ENCODE measurements at regions of chr12 and their contacts with region 1.

Region 1: DNA sequence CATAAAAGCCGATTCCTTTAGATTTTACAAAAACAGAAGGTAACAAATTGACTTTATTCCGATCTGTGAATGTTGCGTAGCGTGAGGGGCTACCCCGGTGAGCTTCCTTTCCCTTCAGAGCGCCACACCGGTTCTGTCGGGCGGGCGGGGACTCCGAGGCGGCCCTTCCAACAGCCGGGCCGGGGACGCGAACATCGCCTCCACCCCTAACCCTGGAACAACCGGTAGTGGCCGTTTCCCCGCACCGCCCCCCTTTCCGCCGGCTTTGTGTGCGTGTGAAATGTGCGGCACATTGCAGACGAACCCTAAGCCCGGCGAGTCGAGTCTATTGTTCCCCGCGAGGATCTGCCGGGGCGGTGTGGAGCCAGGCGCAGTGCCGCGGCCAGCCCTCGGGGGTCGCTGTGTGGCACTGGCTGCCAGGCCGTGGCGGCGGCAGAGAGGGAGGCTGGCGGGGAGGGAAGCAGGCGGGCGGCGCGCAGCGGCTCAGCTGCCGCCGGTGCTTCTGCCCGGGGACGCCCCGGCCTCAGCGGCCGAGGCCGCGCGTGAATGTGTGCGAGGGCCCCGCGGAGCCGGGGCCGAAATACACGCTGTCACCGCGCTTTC is 775 bp upstream of the ARID2 start:
- DNase-seq: peak; percentile 95 to 99 (median 98)
- ATAC-seq: peak; percentile 85
- H3K4me3 ChIP-seq: peak overlapping the region; percentile 91
- H3K4me3 Mint-ChIP-seq: peak overlapping the region; percentile 85 to 100 (median 98)
- H3K27ac ChIP-seq: peak overlapping the region; percentile 96
- H3K27ac Mint-ChIP-seq: peak overlapping the region; percentile 82 to 99 (median 99)
- H3K4me1 ChIP-seq: peaks cover 10 to 31% of the 10 kb centered on the region in 2 donors
- H3K4me1 Mint-ChIP-seq: peaks cover 13 to 39% (median 30%) of the 10 kb centered on the region in 7 donors
- H3K27me3 ChIP-seq: no peaks in the 10 kb centered on the region
- H3K27me3 Mint-ChIP-seq: no peaks in the 10 kb centered on the region

Region 2: GRCh38 chr12:43835656-43836474 is 1892.9 kb before region 1 on chr12 and contains the start of gene TMEM117:
- CTCF ChIA-PET with region 1: no interaction called
- POLR2A ChIA-PET with region 1: no interaction called
- intact Hi-C with region 1: loop called in 1 of 2 experiments (anchors 10 kb)
- DNase-seq: peak; percentile 40 to 73 (median 67)
- ATAC-seq: peak; percentile 83
- H3K4me3 ChIP-seq: peak within 1 kb of the TSS; percentile 73
- H3K4me3 Mint-ChIP-seq: peak within 1 kb of the TSS; percentile 83 to 95 (median 90)
- H3K27ac ChIP-seq: peak within 1 kb of the TSS; percentile 81
- H3K27ac Mint-ChIP-seq: peak within 1 kb of the TSS; percentile 47 to 94 (median 89)
- H3K4me1 ChIP-seq: peaks cover 21 to 27% of the 10 kb centered on the region in 2 donors
- H3K4me1 Mint-ChIP-seq: peaks cover 25 to 75% (median 56%) of the 10 kb centered on the region in 7 donors
- H3K27me3 ChIP-seq: no peaks in the 10 kb centered on the region
- H3K27me3 Mint-ChIP-seq: peaks cover 0 to 45% (median 0%) of the 10 kb centered on the region in 5 donors
- total RNA-seq, gene TMEM117: 0.31 to 6.6 (median 4.2) TPM

Region 3: DNA sequence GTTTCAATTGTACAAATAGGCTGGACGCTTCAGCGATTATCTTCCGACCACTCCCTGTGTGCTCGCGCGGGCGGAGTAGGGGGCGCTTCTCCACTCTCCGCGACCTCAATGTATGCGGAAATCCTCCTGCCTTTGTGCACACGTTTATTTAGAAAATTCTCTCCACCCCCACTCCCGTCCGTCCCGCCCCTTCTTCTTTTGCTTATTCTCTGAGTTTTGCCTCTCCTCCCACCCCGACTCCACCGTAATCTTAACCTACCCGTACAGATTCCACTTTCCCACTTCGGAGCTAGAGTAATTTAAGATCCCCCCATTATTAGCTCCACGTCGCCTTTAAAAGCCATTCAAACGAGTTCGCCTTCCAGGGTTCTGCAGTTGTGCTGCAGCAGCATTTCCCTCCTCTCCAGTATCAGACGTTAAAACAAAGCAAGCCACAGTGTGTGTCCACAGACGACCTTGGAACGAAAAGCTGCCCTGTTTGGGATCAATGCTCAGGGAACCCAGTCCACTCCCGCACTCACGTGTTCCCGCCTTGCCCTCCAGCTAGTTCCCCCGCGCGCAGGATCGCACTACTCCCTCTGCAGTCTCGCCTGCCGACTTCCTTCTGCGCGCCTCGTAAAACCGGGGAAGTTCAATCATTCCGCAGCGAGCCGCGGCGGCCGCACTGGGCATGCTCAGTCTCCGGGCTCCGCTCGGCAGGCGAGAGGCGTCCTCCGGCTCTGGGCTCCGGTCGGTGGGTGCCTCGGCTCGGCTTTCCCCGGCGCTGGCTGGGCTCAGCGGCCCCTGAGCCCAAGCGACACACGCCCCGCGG is 513.1 kb before region 1 on chr12 and contains the start of gene ANO6:
- CTCF ChIA-PET with region 1: no interaction called
- POLR2A ChIA-PET with region 1: no interaction called
- intact Hi-C with region 1: loop called (anchors 1 kb)
- DNase-seq: peak; percentile 58 to 85 (median 71)
- ATAC-seq: peak; percentile 86
- H3K4me3 ChIP-seq: peak within 1 kb of the TSS; percentile 83
- H3K4me3 Mint-ChIP-seq: peak within 1 kb of the TSS; percentile 90 to 99 (median 97)
- H3K27ac ChIP-seq: peak within 1 kb of the TSS; percentile 69
- H3K27ac Mint-ChIP-seq: peak within 1 kb of the TSS; percentile 83 to 96 (median 95)
- H3K4me1 ChIP-seq: peaks cover 17% of the 10 kb centered on the region in 2 donors
- H3K4me1 Mint-ChIP-seq: peaks cover 26 to 70% (median 59%) of the 10 kb centered on the region in 7 donors
- H3K27me3 ChIP-seq: no peaks in the 10 kb centered on the region
- H3K27me3 Mint-ChIP-seq: no peaks in the 10 kb centered on the region
- total RNA-seq, gene ANO6: 15.1 to 29.7 (median 25.3) TPM

Region 4: GRCh38 chr12:45402288-45402687 is 326.4 kb before region 1 on chr12:
- CTCF ChIA-PET with region 1: no interaction called
- POLR2A ChIA-PET with region 1: no interaction called
- intact Hi-C with region 1: no loop called
- DNase-seq: no peak
- ATAC-seq: no peak
- H3K4me3 ChIP-seq: no peak overlapping the region
- H3K4me3 Mint-ChIP-seq: no peak overlapping the region
- H3K27ac ChIP-seq: no peak overlapping the region
- H3K27ac Mint-ChIP-seq: no peak overlapping the region
- H3K4me1 ChIP-seq: no peaks in the 10 kb centered on the region
- H3K4me1 Mint-ChIP-seq: peaks cover 0 to 4% (median 0%) of the 10 kb centered on the region in 7 donors
- H3K27me3 ChIP-seq: no peaks in the 10 kb centered on the region
- H3K27me3 Mint-ChIP-seq: no peaks in the 10 kb centered on the region

Region 5: GRCh38 chr12:45655201-45655600 is 73.5 kb before region 1 on chr12:
- CTCF ChIA-PET with region 1: interaction called, 10 read pairs
- POLR2A ChIA-PET with region 1: interaction called, 25 read pairs
- intact Hi-C with region 1: loop called (anchors 1 kb)
- DNase-seq: peak in 8 of 9 donors; percentile 17 to 83 (median 70)
- ATAC-seq: peak; percentile 100
- H3K4me3 ChIP-seq: no peak overlapping the region
- H3K4me3 Mint-ChIP-seq: no peak overlapping the region
- H3K27ac ChIP-seq: no peak overlapping the region
- H3K27ac Mint-ChIP-seq: peak overlapping the region in 1 of 9 donors; percentile 30
- H3K4me1 ChIP-seq: no peaks in the 10 kb centered on the region
- H3K4me1 Mint-ChIP-seq: peaks cover 0 to 10% (median 7%) of the 10 kb centered on the region in 7 donors
- H3K27me3 ChIP-seq: no peaks in the 10 kb centered on the region
- H3K27me3 Mint-ChIP-seq: peaks cover 0 to 60% (median 5%) of the 10 kb centered on the region in 5 donors

Region 6: DNA sequence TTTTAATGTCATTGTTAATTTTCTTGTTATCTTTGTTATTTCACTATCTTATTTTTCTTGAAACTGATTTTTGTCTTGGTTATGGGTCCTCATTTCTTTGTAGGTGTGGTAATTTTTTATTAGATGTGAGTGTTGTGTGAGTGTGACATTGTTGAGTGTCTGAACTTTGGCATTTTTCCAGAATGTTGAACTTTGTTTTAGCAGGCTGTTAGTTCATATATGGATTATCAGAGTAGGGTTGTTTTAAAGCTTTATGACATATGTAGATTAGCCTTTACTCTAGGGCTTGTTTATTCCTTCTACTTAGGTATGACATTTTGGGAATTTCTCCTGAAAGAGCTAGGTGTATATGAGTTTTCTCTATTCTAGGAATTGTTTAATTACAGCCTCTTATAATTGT is 104.7 kb after region 1 on chr12:
- CTCF ChIA-PET with region 1: interaction called, 3 read pairs
- POLR2A ChIA-PET with region 1: interaction called, 4 read pairs
- intact Hi-C with region 1: loop called in 1 of 2 experiments (anchors 5 kb)
- DNase-seq: no peak
- ATAC-seq: no peak
- H3K4me3 ChIP-seq: no peak overlapping the region
- H3K4me3 Mint-ChIP-seq: no peak overlapping the region
- H3K27ac ChIP-seq: no peak overlapping the region
- H3K27ac Mint-ChIP-seq: peak overlapping the region in 2 of 9 donors; percentile 39 to 66
- H3K4me1 ChIP-seq: no peaks in the 10 kb centered on the region
- H3K4me1 Mint-ChIP-seq: peaks cover 0 to 15% (median 8%) of the 10 kb centered on the region in 7 donors
- H3K27me3 ChIP-seq: no peaks in the 10 kb centered on the region
- H3K27me3 Mint-ChIP-seq: no peaks in the 10 kb centered on the region

Region 7: DNA sequence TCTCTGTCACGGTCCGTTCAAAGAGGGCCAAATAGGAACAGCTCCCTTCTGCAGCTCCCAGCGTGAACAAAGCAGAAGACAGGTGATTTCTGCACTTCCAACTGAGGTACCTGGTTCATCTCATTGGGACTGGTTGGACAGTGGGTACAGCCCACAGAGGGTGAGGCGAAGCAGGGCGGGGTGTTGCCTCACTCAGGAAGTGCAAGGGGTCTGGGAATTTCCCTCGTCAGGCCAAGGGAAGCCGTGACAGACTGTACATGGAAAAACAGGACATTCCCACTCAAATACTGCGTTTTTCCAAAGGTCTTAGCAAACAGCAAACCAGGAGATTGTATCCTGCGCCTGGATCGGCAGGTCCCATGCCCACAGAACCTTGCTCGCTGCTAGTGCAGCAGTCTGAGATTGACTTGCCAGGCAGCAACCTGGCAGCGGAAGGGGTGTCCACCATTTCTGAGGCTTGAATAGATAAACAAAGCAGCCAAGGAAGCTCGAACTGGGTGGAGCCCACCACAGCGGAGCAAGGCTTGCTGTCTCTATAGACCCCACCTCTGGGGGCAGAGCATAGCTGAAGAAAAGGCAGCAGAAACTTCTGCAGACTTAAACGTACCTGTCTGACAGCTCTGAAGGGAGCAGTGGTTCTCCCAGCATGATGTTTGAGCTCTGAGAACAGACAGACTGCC is 517.4 kb after region 1 on chr12:
- CTCF ChIA-PET with region 1: no interaction called
- POLR2A ChIA-PET with region 1: no interaction called
- intact Hi-C with region 1: no loop called
- DNase-seq: peak in 4 of 9 donors; percentile 13 to 43 (median 22)
- ATAC-seq: peak; percentile 32
- H3K4me3 ChIP-seq: no peak overlapping the region
- H3K4me3 Mint-ChIP-seq: peak overlapping the region in 9 of 10 donors; percentile 33 to 73 (median 65)
- H3K27ac ChIP-seq: no peak overlapping the region
- H3K27ac Mint-ChIP-seq: peak overlapping the region in 8 of 9 donors; percentile 13 to 88 (median 74)
- H3K4me1 ChIP-seq: peaks cover 35 to 39% of the 10 kb centered on the region in 2 donors
- H3K4me1 Mint-ChIP-seq: peaks cover 65 to 100% (median 92%) of the 10 kb centered on the region in 7 donors
- H3K27me3 ChIP-seq: no peaks in the 10 kb centered on the region
- H3K27me3 Mint-ChIP-seq: no peaks in the 10 kb centered on the region

Region 8: DNA sequence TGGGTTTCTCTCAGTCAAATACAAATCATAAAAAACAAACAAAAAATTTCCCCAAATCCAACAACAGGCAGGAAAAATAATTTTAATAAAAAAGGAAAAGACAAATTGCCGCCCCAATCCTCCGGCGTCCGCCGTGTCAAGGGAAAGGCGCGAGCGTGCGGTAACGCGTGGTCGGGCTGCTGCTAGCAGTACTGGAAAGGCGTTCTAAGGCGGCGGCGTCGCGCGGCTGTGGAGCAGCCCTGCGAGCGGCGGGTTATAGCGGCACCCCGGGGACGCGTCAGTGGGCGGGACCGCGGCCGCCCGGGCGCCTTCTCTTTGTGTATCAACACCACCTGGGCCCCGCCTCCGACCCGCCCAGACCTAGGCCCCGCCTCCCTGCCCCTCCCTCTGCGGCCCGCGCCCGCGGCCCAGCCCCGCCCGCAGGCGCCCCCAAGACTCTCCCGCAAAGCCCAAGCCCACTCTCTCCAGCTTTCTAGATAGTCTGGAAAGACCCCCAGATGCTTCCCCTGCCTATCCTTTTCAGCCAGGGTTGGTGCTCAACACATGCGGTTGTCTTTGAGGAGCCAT is 643.9 kb after region 1 on chr12 and contains the start of gene SLC38A2:
- CTCF ChIA-PET with region 1: no interaction called
- POLR2A ChIA-PET with region 1: interaction called, 3 read pairs
- intact Hi-C with region 1: loop called (anchors 1 to 2 kb)
- DNase-seq: peak; percentile 95 to 98 (median 96)
- ATAC-seq: peak; percentile 96
- H3K4me3 ChIP-seq: peak within 1 kb of the TSS; percentile 87
- H3K4me3 Mint-ChIP-seq: peak within 1 kb of the TSS; percentile 79 to 99 (median 96)
- H3K27ac ChIP-seq: peak within 1 kb of the TSS; percentile 89
- H3K27ac Mint-ChIP-seq: peak within 1 kb of the TSS; percentile 91 to 100 (median 99)
- H3K4me1 ChIP-seq: peaks cover 37 to 41% of the 10 kb centered on the region in 2 donors
- H3K4me1 Mint-ChIP-seq: peaks cover 31 to 68% (median 59%) of the 10 kb centered on the region in 7 donors
- H3K27me3 ChIP-seq: no peaks in the 10 kb centered on the region
- H3K27me3 Mint-ChIP-seq: peaks cover 0 to 11% (median 0%) of the 10 kb centered on the region in 5 donors
- total RNA-seq, gene SLC38A2: 157 to 269 (median 175) TPM

Region 9: DNA sequence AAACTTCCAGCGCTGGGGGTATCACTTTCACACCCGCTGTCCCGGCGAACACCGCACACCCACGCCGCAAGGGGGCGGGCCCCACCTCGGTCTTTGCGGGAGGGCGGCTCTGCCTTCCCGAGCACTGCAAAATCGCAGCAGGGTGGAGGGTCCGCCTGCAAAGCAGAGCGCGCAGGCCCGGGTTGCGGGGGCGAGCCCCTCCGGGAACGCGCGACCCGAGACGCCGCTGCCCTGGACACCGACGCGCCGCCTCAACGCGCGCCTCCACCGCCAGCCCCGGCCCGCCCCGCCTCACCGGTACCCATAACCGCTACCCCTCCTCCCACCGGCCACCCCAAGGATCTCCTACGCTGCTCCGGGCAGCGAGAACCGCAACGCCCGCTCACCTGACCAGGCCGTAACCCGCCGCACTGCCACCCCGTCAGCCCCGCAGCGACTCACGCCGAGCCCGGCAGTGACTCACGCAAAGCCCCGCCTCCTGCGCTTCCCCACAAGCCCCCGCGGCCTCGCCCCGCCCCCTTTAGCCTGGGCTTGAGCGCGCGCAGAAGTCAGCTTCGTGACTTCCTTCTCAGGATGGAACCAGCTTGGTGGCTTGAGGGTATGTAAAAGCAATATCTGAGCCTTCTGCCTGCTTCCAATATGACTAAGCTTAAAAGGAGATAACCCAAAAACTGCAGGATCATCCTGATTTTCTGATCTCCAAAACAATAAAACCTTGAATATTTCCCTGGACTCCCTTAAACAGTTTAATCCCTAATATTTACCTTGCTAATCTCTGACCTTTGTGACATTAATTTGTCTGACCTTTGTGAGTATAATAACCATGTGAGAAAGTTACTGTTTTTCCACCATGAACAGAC is 1977.1 kb after region 1 on chr12 and contains the start of gene RPAP3:
- CTCF ChIA-PET with region 1: no interaction called
- POLR2A ChIA-PET with region 1: no interaction called
- intact Hi-C with region 1: loop called (anchors 2 to 5 kb)
- DNase-seq: peak; percentile 91 to 99 (median 95)
- ATAC-seq: peak; percentile 97
- H3K4me3 ChIP-seq: peak within 1 kb of the TSS; percentile 59
- H3K4me3 Mint-ChIP-seq: peak within 1 kb of the TSS; percentile 92 to 99 (median 98)
- H3K27ac ChIP-seq: peak within 1 kb of the TSS; percentile 85
- H3K27ac Mint-ChIP-seq: peak within 1 kb of the TSS; percentile 93 to 99 (median 97)
- H3K4me1 ChIP-seq: peaks cover 21 to 27% of the 10 kb centered on the region in 2 donors
- H3K4me1 Mint-ChIP-seq: peaks cover 48 to 73% (median 63%) of the 10 kb centered on the region in 7 donors
- H3K27me3 ChIP-seq: no peaks in the 10 kb centered on the region
- H3K27me3 Mint-ChIP-seq: no peaks in the 10 kb centered on the region
- total RNA-seq, gene RPAP3: 28.5 to 51.3 (median 43.9) TPM

Measured in naive thymus-derived CD4-positive, alpha-beta T cell (primary cell).